Tibial artery (tissue), 4 donors: ENCODE measurements at regions of chr4 and their contacts with region 1.

Region 1: GRCh38 chr4:183471946-183472708 is 27.7 kb downstream of the CDKN2AIP start:
- DNase-seq: peak; percentile 86 to 93
- H3K4me3 ChIP-seq: peak overlapping the region; percentile 16 to 22
- H3K27ac ChIP-seq: no peak overlapping the region
- H3K4me1 ChIP-seq: no peaks in the 10 kb centered on the region
- H3K27me3 ChIP-seq: no peaks in the 10 kb centered on the region
- CTCF ChIP-seq: peak; percentile 74 to 80

Region 2: DNA sequence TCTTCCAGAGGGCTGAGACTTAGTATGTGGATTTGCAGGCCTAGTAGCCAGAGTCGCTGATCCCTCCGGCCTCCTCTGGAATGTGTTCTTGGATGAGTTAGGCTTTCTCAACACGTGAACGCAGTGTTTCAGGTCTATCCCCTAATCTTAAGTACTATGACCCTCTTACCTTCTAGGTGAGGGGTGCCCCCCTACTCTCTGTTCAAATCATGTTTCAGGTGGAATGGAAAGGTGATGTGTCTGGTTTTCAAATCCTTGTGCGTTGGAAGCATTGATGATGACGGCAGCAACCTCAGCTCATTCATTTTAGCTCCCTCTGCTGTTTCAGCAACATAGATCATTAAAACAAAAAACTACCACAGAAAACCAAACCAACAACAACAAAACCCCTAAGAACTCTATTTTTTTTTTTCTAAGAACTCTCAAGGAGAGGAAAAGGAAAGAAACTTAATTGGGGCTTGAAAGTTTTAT is 130.5 kb after region 1 on chr4:
- intact Hi-C with region 1: loop called (anchors 10 kb)
- DNase-seq: no peak
- H3K4me3 ChIP-seq: no peak overlapping the region
- H3K27ac ChIP-seq: no peak overlapping the region
- H3K4me1 ChIP-seq: no peaks in the 10 kb centered on the region
- H3K27me3 ChIP-seq: no peaks in the 10 kb centered on the region
- CTCF ChIP-seq: peak; percentile 30 to 31